ENCODE measurements at regions of chr9 and their contacts with region 1.

Region 1: GRCh38 chr9:72592502-72593403 is 71.3 kb downstream of the TMC1 start:
- DNase-seq: peak; percentile 72
- ATAC-seq: peak; percentile 88
- H3K4me3 ChIP-seq: no peak overlapping the region
- H3K27ac ChIP-seq: no peak overlapping the region; the same call in 1 of the 2 replicates
- H3K4me1 ChIP-seq: peaks cover 5% of the 10 kb centered on the region
- H3K27me3 ChIP-seq: no peaks in the 10 kb centered on the region
- CTCF ChIP-seq: peak; percentile 83
- POLR2A ChIP-seq: no peak
- RAD21 ChIP-seq: peak; percentile 91

Region 2: DNA sequence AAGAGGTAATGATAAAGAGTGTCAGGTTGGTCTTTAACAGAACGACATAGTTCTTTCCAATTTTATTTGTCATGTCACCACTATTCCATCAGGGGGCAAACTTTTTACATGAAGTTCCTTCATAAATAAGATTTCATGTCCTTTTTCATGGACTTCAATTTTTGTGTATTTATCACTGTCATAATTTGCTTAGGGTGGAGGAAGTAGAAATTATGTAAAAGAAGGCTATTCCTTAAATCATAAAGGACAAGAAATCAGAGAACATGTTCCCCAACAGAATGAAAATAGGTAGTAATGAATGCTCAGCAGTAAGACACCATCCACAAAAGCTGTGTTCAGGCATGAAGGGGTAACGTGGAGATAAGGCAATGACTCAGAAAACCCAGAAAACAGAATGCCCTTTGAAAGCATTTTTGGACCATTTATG is 300.5 kb before region 1 on chr9:
- CTCF ChIA-PET with region 1: interaction called, 3 read pairs
- POLR2A ChIA-PET with region 1: no interaction called
- dilution Hi-C with region 1: no loop called
- in situ Hi-C with region 1: no loop called
- intact Hi-C with region 1: loop called (anchors 1 kb)
- DNase-seq: peak; percentile 49
- ATAC-seq: peak; percentile 78
- H3K4me3 ChIP-seq: no peak overlapping the region
- H3K27ac ChIP-seq: no peak overlapping the region
- H3K4me1 ChIP-seq: peaks cover 2% of the 10 kb centered on the region; the same call in 1 of the 2 replicates
- H3K27me3 ChIP-seq: 0 out of 2 replicates have a peak, but pooled peaks cover 4% of the 10 kb centered on the region
- CTCF ChIP-seq: peak; percentile 68
- POLR2A ChIP-seq: no peak
- RAD21 ChIP-seq: peak; percentile 65

Region 3: DNA sequence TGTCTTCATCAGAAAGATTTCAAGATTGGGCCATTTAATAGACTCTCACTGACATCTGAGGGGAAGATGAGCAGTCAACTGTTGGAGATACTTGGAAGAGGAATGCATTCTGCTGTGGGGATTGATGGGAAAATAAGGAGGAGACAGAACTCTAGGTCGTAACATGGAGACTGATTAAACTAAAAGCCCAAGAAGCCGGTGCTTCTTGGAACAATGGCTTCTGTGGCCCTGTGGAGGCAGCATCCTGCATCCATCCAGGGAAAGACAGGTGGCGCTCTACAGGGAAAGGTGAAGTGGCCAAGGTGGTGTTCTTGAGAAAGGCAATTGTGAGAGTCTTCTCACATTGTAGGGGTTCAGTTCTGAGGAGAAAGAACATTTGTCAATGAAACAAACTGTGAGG is 259.0 kb before region 1 on chr9:
- CTCF ChIA-PET with region 1: no interaction called
- POLR2A ChIA-PET with region 1: no interaction called
- dilution Hi-C with region 1: no loop called
- in situ Hi-C with region 1: no loop called
- intact Hi-C with region 1: no loop called
- DNase-seq: no peak
- ATAC-seq: no peak
- H3K4me3 ChIP-seq: no peak overlapping the region
- H3K27ac ChIP-seq: no peak overlapping the region
- H3K4me1 ChIP-seq: no peaks in the 10 kb centered on the region
- H3K27me3 ChIP-seq: peaks cover 5% of the 10 kb centered on the region
- CTCF ChIP-seq: no peak
- POLR2A ChIP-seq: no peak
- RAD21 ChIP-seq: no peak

Region 4: DNA sequence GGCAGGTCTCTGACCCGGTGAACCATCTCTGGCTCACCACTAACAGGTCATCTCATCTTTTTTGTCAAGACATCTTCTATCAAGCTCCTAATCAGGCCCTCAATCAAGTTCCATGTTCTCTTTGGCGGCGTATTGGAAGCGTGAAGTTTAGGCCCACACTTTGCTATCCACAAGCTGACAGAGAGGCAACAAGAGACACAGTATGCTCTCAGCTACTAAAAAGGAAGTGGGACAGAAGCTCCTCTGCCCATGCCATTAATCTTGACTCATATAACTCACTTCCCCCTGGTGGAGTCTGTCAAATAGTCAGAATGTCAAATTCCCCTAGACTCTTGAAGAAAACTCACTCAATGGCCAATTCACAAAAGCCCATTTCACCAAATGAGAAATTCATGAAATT is 148.9 kb before region 1 on chr9:
- CTCF ChIA-PET with region 1: no interaction called
- POLR2A ChIA-PET with region 1: no interaction called
- dilution Hi-C with region 1: no loop called
- in situ Hi-C with region 1: no loop called
- intact Hi-C with region 1: loop called (anchors 2 kb)
- DNase-seq: no peak
- ATAC-seq: no peak
- H3K4me3 ChIP-seq: no peak overlapping the region
- H3K27ac ChIP-seq: peak overlapping the region; percentile 26; the same call in 1 of the 2 replicates
- H3K4me1 ChIP-seq: peaks cover 18% of the 10 kb centered on the region
- H3K27me3 ChIP-seq: no peaks in the 10 kb centered on the region
- CTCF ChIP-seq: no peak
- POLR2A ChIP-seq: no peak
- RAD21 ChIP-seq: no peak

Region 5: DNA sequence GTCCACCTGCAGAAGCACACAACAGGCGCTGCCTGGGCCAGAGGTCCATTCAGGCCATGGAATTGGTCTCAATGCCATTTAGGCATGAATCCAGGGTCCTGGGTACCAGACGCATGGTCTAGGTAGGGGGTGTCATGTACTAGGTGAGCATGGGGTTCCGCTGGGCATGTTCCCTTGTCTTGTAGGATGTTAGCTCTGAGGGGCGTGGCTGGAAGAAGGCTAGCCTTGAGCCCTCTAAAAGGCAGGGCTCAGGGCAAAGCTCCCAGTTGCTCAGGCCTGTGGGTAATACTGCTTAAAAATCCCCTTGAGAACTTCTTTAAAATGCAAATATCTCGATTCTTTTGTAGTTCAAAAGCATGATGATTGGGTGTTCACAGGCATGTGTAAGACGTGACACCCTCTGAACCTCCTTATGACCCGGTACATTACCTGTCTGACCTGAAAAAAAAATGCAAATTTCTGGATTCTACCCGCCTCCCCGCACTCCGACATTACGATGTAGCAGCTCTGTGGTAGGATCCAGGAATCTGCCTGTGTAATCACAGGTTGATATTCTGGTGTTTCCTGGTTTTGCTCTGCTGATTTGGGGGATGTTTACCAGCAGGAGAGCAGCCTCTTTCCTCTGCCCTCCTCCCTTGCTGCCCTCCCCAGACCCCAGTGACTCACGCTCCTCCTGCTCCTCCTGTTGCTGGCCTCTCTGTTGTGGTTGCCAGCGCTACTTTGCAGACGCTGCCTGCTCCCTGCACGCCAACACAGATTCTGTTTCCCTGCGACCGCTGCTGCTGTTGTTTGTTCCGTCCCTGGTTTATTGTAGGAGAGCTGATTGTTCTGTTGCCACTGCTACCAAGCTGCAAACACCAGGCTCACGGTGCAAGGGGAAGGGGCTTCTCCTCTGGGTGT is 65.6 kb before region 1 on chr9:
- CTCF ChIA-PET with region 1: no interaction called
- POLR2A ChIA-PET with region 1: no interaction called
- dilution Hi-C with region 1: no loop called
- in situ Hi-C with region 1: no loop called
- intact Hi-C with region 1: loop called (anchors 2 kb)
- DNase-seq: peak; percentile 93
- ATAC-seq: peak; percentile 90
- H3K4me3 ChIP-seq: peak overlapping the region; percentile 29
- H3K27ac ChIP-seq: peak overlapping the region; percentile 98
- H3K4me1 ChIP-seq: peaks cover 19% of the 10 kb centered on the region
- H3K27me3 ChIP-seq: no peaks in the 10 kb centered on the region
- CTCF ChIP-seq: no peak
- POLR2A ChIP-seq: peak; percentile 72; the same call in 1 of the 2 replicates
- RAD21 ChIP-seq: peak; percentile 38